ENCODE measurements at regions of chr3 and their contacts with region 1.

Region 1: DNA sequence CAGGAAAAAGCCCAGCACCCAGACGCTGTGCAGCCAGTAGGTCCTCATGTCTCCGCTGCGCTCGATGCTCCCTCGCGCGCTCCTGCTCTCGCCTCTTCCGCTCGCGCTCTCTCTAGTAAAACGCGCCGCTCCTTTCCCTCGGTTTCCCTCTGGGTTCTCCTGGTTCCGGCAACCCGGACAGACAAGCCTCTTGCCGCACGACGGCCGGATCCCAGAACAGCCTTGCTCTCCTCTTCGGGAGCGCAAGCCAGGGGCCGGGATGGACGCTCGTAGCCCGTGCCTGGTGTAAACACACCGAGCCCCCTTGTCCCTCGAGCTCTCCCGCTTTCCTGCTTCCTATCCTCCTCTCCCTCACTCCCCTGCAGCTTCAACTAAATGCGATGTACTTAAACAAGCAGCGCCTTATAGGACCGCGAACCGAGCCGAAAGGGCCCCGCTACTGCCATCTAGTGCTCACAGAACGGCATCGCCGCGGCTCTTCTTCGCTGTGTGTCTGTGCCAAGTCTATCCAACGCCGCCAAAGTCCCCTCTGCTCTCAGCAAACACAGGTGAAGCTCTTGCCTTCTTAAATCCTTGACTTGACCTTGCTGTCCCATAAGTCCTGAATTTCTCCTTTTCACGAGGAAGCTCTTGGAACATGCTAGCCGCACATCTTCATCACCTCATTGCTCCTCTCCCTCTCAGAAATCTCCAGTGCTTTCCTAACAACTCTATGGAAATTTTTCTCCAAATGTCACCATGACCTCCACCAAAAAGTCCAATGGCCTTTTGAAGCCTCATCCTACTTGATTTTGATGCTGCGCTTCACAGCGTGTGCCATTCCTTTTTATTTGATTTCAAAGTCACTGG is 1037.2 kb downstream of the IGSF11 start:
- DNase-seq: peak; percentile 89
- H3K4me3 ChIP-seq: peak overlapping the region; percentile 51
- H3K27ac ChIP-seq: no peak overlapping the region
- H3K4me1 ChIP-seq: no peaks in the 10 kb centered on the region
- H3K27me3 ChIP-seq: no peaks in the 10 kb centered on the region
- CTCF ChIP-seq: peak; percentile 90

Region 2: GRCh38 chr3:116863822-116864589 is 1133.4 kb before region 1 on chr3:
- CTCF ChIA-PET with region 1: no interaction called
- POLR2A ChIA-PET with region 1: no interaction called
- intact Hi-C with region 1: loop called (anchors 10 kb)
- DNase-seq: peak; percentile 65
- H3K4me3 ChIP-seq: peak overlapping the region; percentile 22
- H3K27ac ChIP-seq: no peak overlapping the region
- H3K4me1 ChIP-seq: no peaks in the 10 kb centered on the region
- H3K27me3 ChIP-seq: no peaks in the 10 kb centered on the region
- CTCF ChIP-seq: peak; percentile 68

Region 3: DNA sequence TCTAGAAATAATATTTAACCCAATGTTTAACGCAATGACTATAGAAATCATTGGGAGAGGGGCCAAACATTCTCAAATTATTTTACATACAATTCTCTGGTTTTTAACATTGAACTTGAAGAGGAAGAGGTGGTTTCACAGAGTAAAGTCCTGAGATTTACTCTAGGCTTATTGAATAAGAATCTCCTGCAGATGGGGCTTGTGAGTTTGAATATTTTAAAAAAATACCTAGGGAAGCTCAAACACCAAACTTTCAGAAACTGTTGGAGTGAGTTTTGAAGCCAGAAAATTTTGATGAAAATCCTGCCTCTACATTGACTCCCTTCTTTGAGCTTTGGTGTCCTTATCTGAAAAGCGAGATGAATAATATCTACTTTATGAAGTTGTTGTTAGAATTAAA is 381.2 kb before region 1 on chr3:
- CTCF ChIA-PET with region 1: no interaction called
- POLR2A ChIA-PET with region 1: no interaction called
- intact Hi-C with region 1: loop called (anchors 10 kb)
- DNase-seq: peak; percentile 9
- H3K4me3 ChIP-seq: no peak overlapping the region
- H3K27ac ChIP-seq: no peak overlapping the region
- H3K4me1 ChIP-seq: no peaks in the 10 kb centered on the region
- H3K27me3 ChIP-seq: no peaks in the 10 kb centered on the region
- CTCF ChIP-seq: no peak; the same call in 1 of the 2 replicates

Region 4: DNA sequence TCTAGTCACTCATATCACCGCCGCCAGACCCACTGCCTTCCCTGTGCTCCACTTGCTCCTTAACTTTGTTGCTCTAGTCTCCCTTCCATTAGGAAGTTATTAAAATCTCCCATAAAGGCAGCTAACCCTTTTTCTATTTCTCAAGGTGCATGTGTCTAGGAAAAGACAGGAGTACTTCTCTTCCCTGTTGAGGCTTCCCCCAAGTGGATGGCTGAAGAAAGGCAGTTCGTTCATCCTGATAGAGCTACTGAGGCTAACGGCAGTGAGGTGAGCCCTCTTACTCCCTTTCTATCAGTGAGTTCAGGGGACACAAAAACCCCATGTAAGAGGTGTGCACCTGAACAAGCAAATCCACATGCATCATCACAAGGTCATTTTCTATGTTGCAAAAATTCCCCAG is 639.4 kb after region 1 on chr3:
- CTCF ChIA-PET with region 1: no interaction called
- POLR2A ChIA-PET with region 1: no interaction called
- intact Hi-C with region 1: loop called (anchors 10 kb)
- DNase-seq: peak; percentile 11
- H3K4me3 ChIP-seq: no peak overlapping the region
- H3K27ac ChIP-seq: no peak overlapping the region
- H3K4me1 ChIP-seq: no peaks in the 10 kb centered on the region
- H3K27me3 ChIP-seq: peaks cover 5% of the 10 kb centered on the region
- CTCF ChIP-seq: peak; percentile 35; the same call in 1 of the 2 replicates

Measured in A673 (cell line).